ENCODE measurements at regions of chr5 and their contacts with region 1.

Region 1: DNA sequence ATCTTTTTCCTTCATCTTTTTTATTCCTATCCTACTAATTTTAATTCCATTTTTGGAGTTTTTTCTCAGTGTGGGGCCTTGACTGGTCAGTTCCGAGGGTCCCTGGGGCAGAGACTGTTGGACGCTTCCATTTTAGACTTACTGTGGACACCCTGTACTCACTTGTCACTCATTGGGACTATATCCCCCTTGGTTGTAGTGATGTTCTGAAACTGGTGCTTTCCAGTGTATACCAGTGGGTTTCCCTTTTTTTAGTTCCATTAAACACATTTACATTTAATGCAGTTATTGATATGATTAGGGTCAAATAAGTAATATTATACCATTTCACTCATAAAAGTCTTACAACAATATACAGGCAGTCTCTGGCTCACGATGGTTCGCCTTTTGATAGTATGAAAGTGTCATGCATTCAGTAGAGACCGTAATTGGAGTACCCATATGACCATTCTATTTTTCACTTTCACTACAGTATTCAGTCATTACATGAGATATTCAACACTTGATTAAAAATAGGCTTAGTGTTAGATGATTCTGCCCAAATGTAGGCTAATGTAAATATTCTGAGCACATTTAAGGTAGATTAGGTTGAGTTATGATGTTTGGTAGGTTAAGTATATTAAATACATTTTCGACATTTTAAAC is 46.0 kb downstream of the CNOT6 start:
- DNase-seq: no peak
- ATAC-seq: no peak
- H3K4me3 ChIP-seq: no peak overlapping the region
- H3K27ac ChIP-seq: no peak overlapping the region
- H3K4me1 ChIP-seq: no peaks in the 10 kb centered on the region
- H3K27me3 ChIP-seq: no peaks in the 10 kb centered on the region
- CTCF ChIP-seq: no peak
- POLR2A ChIP-seq: no peak
- RAD21 ChIP-seq: no peak

Region 2: DNA sequence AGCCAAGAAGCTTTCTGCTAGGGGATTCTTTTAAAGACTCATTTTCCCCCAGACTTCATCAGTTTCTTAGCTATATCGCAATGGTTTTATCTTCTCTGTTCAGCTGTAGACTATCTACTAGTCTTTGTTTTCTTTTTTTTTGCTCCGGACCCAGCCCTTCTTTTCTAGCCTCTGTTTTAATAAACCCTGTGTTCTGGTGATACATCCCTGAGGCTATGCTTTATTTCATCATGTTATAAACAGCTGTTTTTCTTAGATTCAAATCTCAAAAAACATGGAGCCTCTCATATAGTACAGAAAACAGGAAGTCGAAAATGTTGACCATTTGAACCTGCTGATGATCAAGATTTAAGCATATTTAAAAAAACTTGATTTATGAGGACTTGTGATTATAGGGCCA is 13.4 kb after region 1 on chr5:
- CTCF ChIA-PET with region 1: no interaction called
- POLR2A ChIA-PET with region 1: no interaction called
- RAD21 ChIA-PET with region 1: no interaction called
- intact Hi-C with region 1: loop called (anchors 1 kb)
- DNase-seq: no peak
- ATAC-seq: no peak
- H3K4me3 ChIP-seq: no peak overlapping the region
- H3K27ac ChIP-seq: no peak overlapping the region
- H3K4me1 ChIP-seq: no peaks in the 10 kb centered on the region
- H3K27me3 ChIP-seq: no peaks in the 10 kb centered on the region
- CTCF ChIP-seq: no peak
- POLR2A ChIP-seq: no peak
- RAD21 ChIP-seq: no peak